ENCODE measurements at regions of chr6 and their contacts with region 1.

Region 1: GRCh38 chr6:160930547-160931377 is 60.8 kb upstream of the MAP3K4 start:
- DNase-seq: peak; percentile 58 to 75
- H3K4me3 ChIP-seq: peak overlapping the region; percentile 49 to 73 (median 59)
- H3K27ac ChIP-seq: peak overlapping the region; percentile 64 to 85
- H3K4me1 ChIP-seq: no peaks in the 10 kb centered on the region
- H3K27me3 ChIP-seq: no peaks in the 10 kb centered on the region
- CTCF ChIP-seq: peak; percentile 87 to 89 (median 88)
- POLR2A ChIP-seq: no peak

Region 2: DNA sequence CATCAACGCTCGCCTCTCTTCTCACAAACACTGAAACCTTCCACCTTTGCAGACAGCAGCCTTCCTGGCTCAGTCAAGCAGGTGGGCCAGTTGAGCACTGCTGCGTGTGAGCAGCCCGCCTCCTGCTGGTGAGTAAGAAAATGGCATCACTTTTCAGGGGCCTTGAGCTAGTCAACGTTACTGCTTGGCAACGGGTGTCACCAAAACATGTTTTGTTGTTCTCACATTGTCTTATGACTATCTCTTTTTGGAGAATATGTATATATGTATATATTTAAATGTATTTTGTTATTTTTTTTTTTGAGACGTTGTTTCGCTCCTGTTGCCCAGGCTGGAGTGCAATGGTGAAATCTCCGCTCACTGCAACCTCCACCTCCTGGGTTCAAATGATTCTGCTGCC is 440.1 kb after region 1 on chr6:
- intact Hi-C with region 1: loop called (anchors 10 kb)
- DNase-seq: peak; percentile 30 to 67
- H3K4me3 ChIP-seq: no peak overlapping the region
- H3K27ac ChIP-seq: no peak overlapping the region
- H3K4me1 ChIP-seq: peaks cover 0 to 4% of the 10 kb centered on the region in 2 donors
- H3K27me3 ChIP-seq: no peaks in the 10 kb centered on the region
- CTCF ChIP-seq: peak; percentile 69 to 79 (median 72)
- POLR2A ChIP-seq: no peak